CD8-positive, alpha-beta T cell (primary cell): ENCODE measurements at regions of chr1 and their contacts with region 1.

Region 1: DNA sequence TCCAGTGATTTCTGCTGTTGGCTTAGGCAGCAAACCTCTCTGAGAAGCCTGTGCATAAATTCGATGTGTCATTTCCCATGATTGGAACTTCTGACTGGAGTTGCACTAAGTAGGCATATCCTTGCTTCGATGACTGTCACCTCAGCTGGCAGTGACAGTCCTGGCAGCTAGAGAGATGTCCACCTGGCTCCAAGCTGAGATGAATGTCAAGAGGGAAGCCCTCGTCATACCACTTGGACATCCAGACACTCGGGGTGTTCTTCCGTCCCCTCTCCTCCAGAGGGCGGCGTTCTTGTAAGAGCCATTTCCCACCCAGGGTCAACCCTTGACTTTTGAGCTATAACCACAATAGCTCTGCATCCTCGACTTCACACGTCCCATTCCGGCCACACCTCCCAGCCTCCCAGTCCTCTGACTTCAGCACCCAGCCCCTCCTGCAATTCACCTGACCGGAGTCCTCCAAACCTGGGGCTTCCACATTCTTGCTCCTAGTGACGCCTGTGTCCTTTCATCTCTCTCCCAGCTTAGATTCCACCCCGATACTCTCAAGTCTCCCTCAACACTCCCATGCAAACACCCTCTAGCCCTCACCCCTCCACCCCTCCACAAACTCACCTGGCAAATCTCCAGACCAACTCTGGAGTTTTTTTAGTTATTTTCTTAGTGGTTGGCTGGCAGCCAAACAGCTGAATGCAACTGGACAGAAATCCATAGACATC is 17.3 kb downstream of the CA6 start:
- DNase-seq: peak in 8 of 9 experiments; percentile 30 to 66 (median 46)
- ATAC-seq: peak; percentile 42
- H3K4me3 ChIP-seq: peak overlapping the region in 1 of 2 experiments; percentile 31
- H3K4me3 Mint-ChIP-seq: peak overlapping the region; percentile 64
- H3K27ac ChIP-seq: peak overlapping the region in 1 of 2 experiments; percentile 35
- H3K27ac Mint-ChIP-seq: peak overlapping the region; percentile 80
- H3K4me1 ChIP-seq: peaks cover 74% of the 10 kb centered on the region
- H3K4me1 Mint-ChIP-seq: peaks cover 73% of the 10 kb centered on the region
- H3K27me3 ChIP-seq: no peaks in the 10 kb centered on the region
- H3K27me3 Mint-ChIP-seq: no peaks in the 10 kb centered on the region
- CTCF ChIP-seq: peak; percentile 31

Region 2: DNA sequence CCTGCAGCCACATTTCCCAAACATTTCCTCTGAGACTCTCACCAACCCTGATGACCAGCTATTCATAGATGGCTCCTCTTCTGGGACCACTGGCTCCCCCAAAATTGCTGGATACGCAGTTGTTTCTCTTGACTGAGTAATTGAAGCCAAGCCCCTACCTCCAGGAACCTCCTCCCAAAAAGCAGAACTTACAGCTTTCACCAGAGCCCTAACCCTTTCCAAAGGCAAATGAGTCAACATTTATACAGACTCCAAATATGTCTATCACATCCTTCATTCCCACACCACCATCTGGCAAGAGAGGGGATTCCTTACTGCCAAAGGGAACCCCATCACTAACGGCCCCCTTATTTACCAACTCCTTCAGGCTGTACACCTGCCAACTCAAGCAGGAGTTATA is 37.6 kb before region 1 on chr1:
- CTCF ChIA-PET with region 1: interaction called, 7 read pairs
- POLR2A ChIA-PET with region 1: interaction called, 20 read pairs
- intact Hi-C with region 1: no loop called
- DNase-seq: no peak
- ATAC-seq: no peak
- H3K4me3 ChIP-seq: peak overlapping the region; percentile 57 to 77
- H3K4me3 Mint-ChIP-seq: no peak overlapping the region
- H3K27ac ChIP-seq: peak overlapping the region; percentile 37 to 78
- H3K27ac Mint-ChIP-seq: no peak overlapping the region
- H3K4me1 ChIP-seq: peaks cover 26% of the 10 kb centered on the region
- H3K4me1 Mint-ChIP-seq: peaks cover 30% of the 10 kb centered on the region
- H3K27me3 ChIP-seq: no peaks in the 10 kb centered on the region
- H3K27me3 Mint-ChIP-seq: no peaks in the 10 kb centered on the region
- CTCF ChIP-seq: no peak

Region 3: GRCh38 chr1:8941906-8942305 is 21.1 kb before region 1 on chr1:
- CTCF ChIA-PET with region 1: interaction called, 23 read pairs
- POLR2A ChIA-PET with region 1: interaction called, 11 read pairs
- intact Hi-C with region 1: no loop called
- DNase-seq: no peak
- ATAC-seq: no peak
- H3K4me3 ChIP-seq: no peak overlapping the region
- H3K4me3 Mint-ChIP-seq: no peak overlapping the region
- H3K27ac ChIP-seq: no peak overlapping the region
- H3K27ac Mint-ChIP-seq: peak overlapping the region; percentile 69
- H3K4me1 ChIP-seq: peaks cover 98% of the 10 kb centered on the region
- H3K4me1 Mint-ChIP-seq: peaks cover 85% of the 10 kb centered on the region
- H3K27me3 ChIP-seq: no peaks in the 10 kb centered on the region
- H3K27me3 Mint-ChIP-seq: no peaks in the 10 kb centered on the region
- CTCF ChIP-seq: no peak

Region 4: DNA sequence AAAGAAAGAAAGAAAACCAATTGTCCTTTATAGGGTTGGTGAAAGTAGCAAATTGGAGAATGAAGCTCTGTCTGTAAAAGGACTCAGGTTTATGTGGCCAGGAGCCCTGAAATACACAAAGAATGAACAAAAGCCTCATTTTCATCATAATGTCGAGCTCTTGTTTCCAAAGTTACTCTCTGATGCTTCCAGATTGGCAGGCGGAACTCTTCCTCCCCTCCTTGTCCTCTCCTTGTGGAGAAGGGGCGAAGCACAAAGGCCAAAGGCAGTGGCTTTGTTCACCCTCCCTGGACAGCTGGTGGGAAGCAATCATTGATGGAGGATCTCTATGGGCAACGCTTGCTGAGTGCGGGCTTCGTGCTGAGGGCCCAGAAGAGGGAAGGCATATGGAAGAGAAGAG is 11.7 kb before region 1 on chr1:
- CTCF ChIA-PET with region 1: interaction called, 23 read pairs
- POLR2A ChIA-PET with region 1: interaction called, 7 read pairs
- intact Hi-C with region 1: no loop called
- DNase-seq: no peak
- ATAC-seq: no peak
- H3K4me3 ChIP-seq: no peak overlapping the region
- H3K4me3 Mint-ChIP-seq: no peak overlapping the region
- H3K27ac ChIP-seq: no peak overlapping the region
- H3K27ac Mint-ChIP-seq: peak overlapping the region; percentile 87
- H3K4me1 ChIP-seq: peaks cover 59% of the 10 kb centered on the region
- H3K4me1 Mint-ChIP-seq: peaks cover 58% of the 10 kb centered on the region
- H3K27me3 ChIP-seq: no peaks in the 10 kb centered on the region
- H3K27me3 Mint-ChIP-seq: no peaks in the 10 kb centered on the region
- CTCF ChIP-seq: no peak

Region 5: DNA sequence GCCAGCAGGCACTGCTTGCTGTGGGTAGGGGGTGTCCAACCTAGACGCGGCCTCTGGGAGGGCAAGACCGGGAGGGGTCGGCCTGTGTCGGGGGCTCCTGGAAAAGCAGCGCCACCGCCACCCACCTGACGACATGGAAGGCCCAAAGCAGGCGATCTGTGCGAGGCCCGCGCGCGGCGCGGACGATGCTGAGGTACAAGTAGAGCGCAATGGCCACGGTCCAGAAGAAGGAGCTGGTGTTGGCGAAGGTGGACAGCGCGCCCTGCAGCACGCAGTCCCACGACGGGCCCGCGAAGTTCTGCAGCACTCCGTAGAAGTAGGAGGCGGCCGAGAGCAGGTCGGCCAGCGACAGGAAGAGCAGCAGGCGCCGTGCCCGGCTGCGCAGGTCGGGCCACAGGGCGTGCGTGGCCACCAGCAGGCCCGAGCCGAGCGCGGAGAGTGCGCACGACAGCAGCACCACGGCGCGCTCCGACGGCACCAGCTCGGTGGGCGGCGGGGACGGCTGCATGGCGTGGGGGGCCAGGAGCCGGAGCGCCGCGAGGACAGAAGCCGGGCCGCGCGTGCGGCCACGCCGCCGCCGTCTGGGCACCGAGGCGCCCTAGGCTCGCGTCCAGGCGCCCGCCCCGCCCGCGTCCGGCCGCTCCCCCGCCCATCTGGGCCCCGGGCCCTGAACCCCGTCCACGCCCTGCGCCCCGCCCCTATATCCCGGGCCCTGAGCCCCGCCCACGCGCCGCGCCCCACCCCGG is 165.7 kb after region 1 on chr1 and contains the start of gene GPR157:
- CTCF ChIA-PET with region 1: no interaction called
- POLR2A ChIA-PET with region 1: no interaction called
- intact Hi-C with region 1: no loop called
- DNase-seq: peak; percentile 56 to 88 (median 81)
- ATAC-seq: peak; percentile 84
- H3K4me3 ChIP-seq: peak within 1 kb of the TSS; percentile 61 to 68
- H3K4me3 Mint-ChIP-seq: peak within 1 kb of the TSS; percentile 90
- H3K27ac ChIP-seq: peak within 1 kb of the TSS; percentile 37 to 50
- H3K27ac Mint-ChIP-seq: peak within 1 kb of the TSS; percentile 75
- H3K4me1 ChIP-seq: peaks cover 33% of the 10 kb centered on the region
- H3K4me1 Mint-ChIP-seq: peaks cover 35% of the 10 kb centered on the region
- H3K27me3 ChIP-seq: no peaks in the 10 kb centered on the region
- H3K27me3 Mint-ChIP-seq: no peaks in the 10 kb centered on the region
- CTCF ChIP-seq: no peak
- total RNA-seq, gene GPR157: 1.9 to 2.9 TPM

Region 6: DNA sequence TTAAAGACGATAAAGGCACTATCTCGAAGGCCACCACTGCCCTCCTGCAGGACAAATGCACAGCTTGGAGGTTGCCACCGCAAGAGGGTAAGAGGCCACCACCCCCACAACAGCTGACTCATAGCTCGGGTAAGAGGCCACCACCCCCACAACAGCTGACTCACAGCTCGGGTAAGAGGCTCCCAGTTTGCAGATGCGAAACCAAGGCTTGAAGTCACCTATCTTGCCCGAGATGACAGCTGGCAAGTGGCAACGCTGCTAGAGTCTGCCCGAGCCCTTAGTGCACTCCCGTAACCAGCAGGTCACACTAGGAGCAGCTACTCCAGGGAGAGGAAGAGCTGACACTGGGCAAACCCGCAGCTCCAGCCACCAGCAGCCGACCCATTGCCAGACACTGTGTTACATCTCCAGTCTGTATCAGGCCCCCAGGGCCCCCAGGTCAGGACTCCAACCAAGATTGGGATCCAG is 312.6 kb after region 1 on chr1:
- CTCF ChIA-PET with region 1: no interaction called
- POLR2A ChIA-PET with region 1: no interaction called
- intact Hi-C with region 1: no loop called
- DNase-seq: peak in 8 of 9 experiments; percentile 21 to 79 (median 64)
- ATAC-seq: peak; percentile 78
- H3K4me3 ChIP-seq: no peak overlapping the region
- H3K4me3 Mint-ChIP-seq: no peak overlapping the region
- H3K27ac ChIP-seq: no peak overlapping the region
- H3K27ac Mint-ChIP-seq: no peak overlapping the region
- H3K4me1 ChIP-seq: peaks cover 18% of the 10 kb centered on the region
- H3K4me1 Mint-ChIP-seq: peaks cover 22% of the 10 kb centered on the region
- H3K27me3 ChIP-seq: no peaks in the 10 kb centered on the region
- H3K27me3 Mint-ChIP-seq: no peaks in the 10 kb centered on the region
- CTCF ChIP-seq: no peak

Region 7: GRCh38 chr1:10407201-10407600 is 1444.2 kb after region 1 on chr1:
- CTCF ChIA-PET with region 1: no interaction called
- POLR2A ChIA-PET with region 1: no interaction called
- intact Hi-C with region 1: no loop called
- DNase-seq: no peak
- ATAC-seq: no peak
- H3K4me3 ChIP-seq: no peak overlapping the region
- H3K4me3 Mint-ChIP-seq: no peak overlapping the region
- H3K27ac ChIP-seq: no peak overlapping the region
- H3K27ac Mint-ChIP-seq: no peak overlapping the region
- H3K4me1 ChIP-seq: no peaks in the 10 kb centered on the region
- H3K4me1 Mint-ChIP-seq: no peaks in the 10 kb centered on the region
- H3K27me3 ChIP-seq: no peaks in the 10 kb centered on the region
- H3K27me3 Mint-ChIP-seq: no peaks in the 10 kb centered on the region
- CTCF ChIP-seq: no peak